Panc1 (cell line): ENCODE measurements at regions of chr3 and their contacts with region 1.

Region 1: GRCh38 chr3:168865022-168865551 is 769.4 kb upstream of the GOLIM4 start:
- DNase-seq: no peak
- ATAC-seq: no peak
- H3K4me3 ChIP-seq: no peak overlapping the region
- H3K27ac ChIP-seq: no peak overlapping the region
- H3K4me1 ChIP-seq: no peaks in the 10 kb centered on the region
- H3K27me3 ChIP-seq: no peaks in the 10 kb centered on the region
- CTCF ChIP-seq: peak; percentile 79; the same call in 1 of the 2 replicates

Region 2: DNA sequence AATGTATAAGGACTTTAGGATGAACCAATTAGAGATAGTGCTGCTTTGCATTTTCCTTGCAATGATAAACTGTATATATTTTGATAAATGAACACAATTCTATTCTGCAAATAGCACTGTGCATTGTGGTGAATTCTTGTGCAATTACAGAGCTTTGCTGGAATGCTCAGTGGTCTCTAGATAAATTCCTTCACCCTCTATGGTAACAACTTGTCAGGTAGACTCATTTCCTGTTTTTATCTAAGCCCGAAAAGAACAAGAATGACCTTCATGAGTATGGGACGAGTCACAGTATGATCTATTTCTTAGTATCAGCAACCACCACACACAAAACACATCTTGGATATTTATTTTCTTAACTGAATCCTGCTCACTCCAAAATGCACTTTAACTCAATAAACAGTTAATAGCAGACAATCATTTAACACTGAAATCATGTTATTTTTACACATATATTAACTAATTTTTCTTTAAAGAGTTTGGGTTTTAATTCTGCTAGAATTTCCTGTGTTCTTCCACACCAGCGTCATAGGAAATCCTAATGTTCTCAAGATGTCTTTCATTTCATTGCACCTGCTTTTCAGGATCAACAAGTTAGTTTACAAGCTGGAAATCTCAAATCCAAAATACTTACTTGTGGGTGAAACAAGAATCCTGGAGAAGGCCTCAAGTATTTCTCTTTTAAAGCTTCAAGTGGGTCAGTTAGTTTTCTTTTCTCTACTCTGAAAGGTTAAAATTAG is 247.2 kb after region 1 on chr3:
- CTCF ChIA-PET with region 1: no interaction called
- POLR2A ChIA-PET with region 1: no interaction called
- in situ Hi-C with region 1: no loop called
- intact Hi-C with region 1: no loop called
- DNase-seq: no peak
- ATAC-seq: no peak
- H3K4me3 ChIP-seq: no peak overlapping the region
- H3K27ac ChIP-seq: no peak overlapping the region
- H3K4me1 ChIP-seq: no peaks in the 10 kb centered on the region
- H3K27me3 ChIP-seq: no peaks in the 10 kb centered on the region
- CTCF ChIP-seq: no peak

Region 3: DNA sequence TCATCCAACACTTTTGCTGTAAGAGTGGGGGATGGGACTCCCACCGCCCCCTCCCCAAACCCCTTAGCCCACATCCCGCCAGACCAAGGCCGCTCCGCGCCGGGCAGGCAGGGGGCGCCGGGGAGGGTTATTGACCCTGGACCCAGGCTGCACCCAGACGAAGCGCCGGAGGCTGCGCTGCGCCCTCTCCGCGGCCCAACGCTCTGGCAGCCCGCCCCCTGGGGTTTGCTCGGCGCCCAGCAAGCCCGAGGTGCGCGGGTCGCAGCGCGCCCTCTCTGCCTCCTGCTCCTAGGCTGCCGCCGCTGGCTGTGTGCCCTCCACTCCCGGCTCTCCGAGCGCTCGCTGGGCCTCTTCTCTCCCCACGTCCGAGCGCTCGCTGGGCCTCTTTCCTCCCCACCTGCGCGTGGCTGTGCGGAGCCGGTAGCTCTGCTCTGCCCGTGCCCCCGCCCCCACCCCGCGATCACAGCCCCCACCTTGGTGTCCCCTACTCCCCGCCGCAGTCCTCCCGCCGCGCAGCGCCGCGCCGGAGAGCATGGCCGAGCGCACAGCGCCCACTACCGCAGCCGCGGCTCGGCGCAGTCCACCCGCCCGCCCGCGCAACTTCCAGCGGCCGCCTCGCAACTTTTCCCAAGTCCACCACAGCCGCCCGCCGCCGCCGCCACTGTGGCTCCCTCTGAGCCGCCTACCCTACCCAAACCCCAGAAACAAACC is 797.2 kb after region 1 on chr3:
- CTCF ChIA-PET with region 1: no interaction called
- POLR2A ChIA-PET with region 1: no interaction called
- in situ Hi-C with region 1: no loop called
- intact Hi-C with region 1: loop called (anchors 5 kb)
- DNase-seq: no peak
- ATAC-seq: peak; percentile 81
- H3K4me3 ChIP-seq: peak overlapping the region; percentile 37 to 61
- H3K27ac ChIP-seq: no peak overlapping the region
- H3K4me1 ChIP-seq: peaks cover 11% of the 10 kb centered on the region
- H3K27me3 ChIP-seq: peaks cover 81% of the 10 kb centered on the region
- CTCF ChIP-seq: peak; percentile 84